ENCODE measurements at regions of chr10 and their contacts with region 1.

Region 1: GRCh38 chr10:7525314-7526016 is 114.6 kb upstream of the SFMBT2 start:
- DNase-seq: peak; percentile 64 to 71
- ATAC-seq: peak; percentile 78 to 92; a peak in 5 of 6 replicates
- H3K4me3 ChIP-seq: no peak overlapping the region
- H3K27ac ChIP-seq: no peak overlapping the region
- H3K4me1 ChIP-seq: no peaks in the 10 kb centered on the region
- CTCF ChIP-seq: peak; percentile 98
- EP300 ChIP-seq: no peak
- POLR2A ChIP-seq: no peak
- RAD21 ChIP-seq: peak; percentile 93 to 94

Region 2: DNA sequence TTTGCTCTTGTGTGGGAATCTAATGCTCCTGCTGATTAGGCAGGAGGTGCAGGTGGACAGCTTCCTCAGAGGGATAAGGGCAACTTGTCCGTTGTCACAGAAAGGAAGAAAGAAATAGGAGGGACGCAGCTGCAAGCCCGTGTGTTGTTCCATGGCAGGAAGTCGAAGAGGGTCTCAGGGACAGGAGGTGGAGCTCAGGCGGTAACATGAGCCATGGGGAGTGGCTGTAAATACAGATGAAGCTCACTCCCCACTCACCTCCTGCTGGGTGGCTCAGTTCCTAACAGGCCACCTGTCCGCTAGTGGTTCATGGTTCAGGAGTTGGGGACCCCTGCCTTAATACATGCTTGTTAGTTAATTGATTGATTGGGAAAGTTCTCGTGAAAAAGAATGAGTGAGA is 13.0 kb before region 1 on chr10:
- CTCF ChIA-PET with region 1: interaction called, 31 read pairs
- POLR2A ChIA-PET with region 1: no interaction called
- DNase-seq: no peak
- ATAC-seq: no peak
- H3K4me3 ChIP-seq: no peak overlapping the region
- H3K27ac ChIP-seq: no peak overlapping the region
- H3K4me1 ChIP-seq: no peaks in the 10 kb centered on the region
- CTCF ChIP-seq: no peak
- EP300 ChIP-seq: no peak
- POLR2A ChIP-seq: no peak
- RAD21 ChIP-seq: no peak

Region 3: DNA sequence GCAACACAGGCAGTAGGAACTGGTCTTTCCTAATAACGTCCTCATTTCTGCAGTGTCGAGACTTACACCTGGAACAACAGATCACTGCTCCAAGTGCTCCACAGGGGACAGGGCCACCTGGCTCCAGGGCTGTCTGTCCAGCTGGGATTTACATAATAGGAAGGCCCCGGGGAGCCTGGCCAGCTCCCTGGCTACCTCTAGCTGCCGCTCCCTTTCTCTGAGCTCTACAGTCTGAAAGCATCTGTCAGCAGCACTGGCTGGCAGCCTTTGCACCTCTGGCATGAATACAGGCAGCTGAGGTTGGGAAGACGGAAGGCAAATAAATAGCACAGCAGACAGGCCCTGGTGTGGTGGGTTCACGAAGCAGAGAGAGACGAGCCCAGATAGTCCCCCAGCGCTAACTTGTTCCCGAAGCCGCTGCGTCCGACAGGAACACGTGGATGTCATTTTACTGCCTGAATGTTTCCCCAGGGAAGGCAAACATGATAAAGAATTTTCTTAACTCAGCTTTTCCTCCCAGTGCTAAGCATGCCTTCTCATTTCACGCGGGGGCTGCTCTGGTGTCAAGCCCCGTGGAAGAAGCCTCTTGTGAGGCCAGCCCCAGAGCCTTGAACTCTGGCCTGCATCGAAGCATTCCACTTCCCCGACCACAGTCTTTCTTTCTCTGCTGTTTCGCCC is 35.9 kb after region 1 on chr10:
- CTCF ChIA-PET with region 1: interaction called, 10 read pairs
- POLR2A ChIA-PET with region 1: no interaction called
- DNase-seq: no peak
- ATAC-seq: no peak
- H3K4me3 ChIP-seq: no peak overlapping the region
- H3K27ac ChIP-seq: no peak overlapping the region
- H3K4me1 ChIP-seq: no peaks in the 10 kb centered on the region
- CTCF ChIP-seq: no peak
- EP300 ChIP-seq: no peak
- POLR2A ChIP-seq: no peak
- RAD21 ChIP-seq: no peak

Region 4: GRCh38 chr10:7687228-7687907 is 161.9 kb after region 1 on chr10:
- CTCF ChIA-PET with region 1: interaction called, 106 read pairs
- POLR2A ChIA-PET with region 1: no interaction called
- DNase-seq: peak; percentile 74 to 94
- ATAC-seq: peak; percentile 95 to 99
- H3K4me3 ChIP-seq: no peak overlapping the region
- H3K27ac ChIP-seq: peak overlapping the region in 1 of 2 experiments; percentile 3; a peak in 1 of 6 replicates
- H3K4me1 ChIP-seq: 0 out of 3 replicates have a peak, but pooled peaks cover 4% of the 10 kb centered on the region
- CTCF ChIP-seq: peak; percentile 94
- EP300 ChIP-seq: no peak
- POLR2A ChIP-seq: no peak
- RAD21 ChIP-seq: peak; percentile 89 to 93

Region 5: GRCh38 chr10:9209105-9209798 is 1683.8 kb after region 1 on chr10:
- CTCF ChIA-PET with region 1: interaction called, 12 read pairs
- POLR2A ChIA-PET with region 1: no interaction called
- DNase-seq: peak; percentile 38 to 68
- ATAC-seq: peak; percentile 54 to 73; a peak in 4 of 6 replicates
- H3K4me3 ChIP-seq: no peak overlapping the region
- H3K27ac ChIP-seq: no peak overlapping the region
- H3K4me1 ChIP-seq: 0 out of 3 replicates have a peak, but pooled peaks cover 3% of the 10 kb centered on the region
- CTCF ChIP-seq: peak; percentile 86
- EP300 ChIP-seq: no peak
- POLR2A ChIP-seq: no peak
- RAD21 ChIP-seq: peak; percentile 89 to 90

Region 6: GRCh38 chr10:9294865-9295264 is 1769.4 kb after region 1 on chr10:
- CTCF ChIA-PET with region 1: interaction called, 20 read pairs
- POLR2A ChIA-PET with region 1: no interaction called
- DNase-seq: no peak
- ATAC-seq: no peak
- H3K4me3 ChIP-seq: no peak overlapping the region
- H3K27ac ChIP-seq: no peak overlapping the region
- H3K4me1 ChIP-seq: no peaks in the 10 kb centered on the region
- CTCF ChIP-seq: no peak
- EP300 ChIP-seq: no peak
- POLR2A ChIP-seq: no peak
- RAD21 ChIP-seq: no peak

Region 7: DNA sequence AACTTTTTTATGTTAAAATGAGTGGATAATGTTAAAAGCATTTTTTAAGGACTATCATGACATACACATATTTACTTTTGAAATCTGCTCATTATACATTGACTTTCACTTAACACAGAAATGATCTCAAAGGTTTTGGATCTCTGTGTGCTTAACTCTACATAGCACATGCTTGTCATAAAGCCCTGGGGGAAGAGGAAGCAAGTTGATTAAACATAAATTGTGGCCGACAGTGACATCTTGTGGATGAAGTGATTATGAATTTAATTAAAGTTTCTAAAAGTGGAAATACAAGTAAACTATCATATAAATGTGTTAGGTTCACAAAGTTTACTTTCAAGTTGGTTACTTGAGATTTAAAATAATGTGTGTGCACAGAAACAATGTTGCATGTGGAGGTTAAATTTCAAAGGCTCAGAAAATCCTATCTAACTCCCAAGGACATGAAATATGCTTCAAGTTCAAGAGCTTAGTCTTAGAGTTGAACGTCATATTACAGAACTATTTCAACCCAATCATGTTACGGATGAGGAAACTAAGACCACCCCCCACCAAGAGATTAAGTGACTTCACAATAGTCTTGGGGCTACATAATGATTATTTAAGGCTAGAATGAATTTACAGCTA is 1776.8 kb after region 1 on chr10:
- CTCF ChIA-PET with region 1: interaction called, 58 read pairs
- POLR2A ChIA-PET with region 1: no interaction called
- DNase-seq: peak; percentile 16 to 65
- ATAC-seq: peak; percentile 64 to 72; a peak in 4 of 6 replicates
- H3K4me3 ChIP-seq: no peak overlapping the region
- H3K27ac ChIP-seq: no peak overlapping the region
- H3K4me1 ChIP-seq: no peaks in the 10 kb centered on the region
- CTCF ChIP-seq: peak; percentile 71
- EP300 ChIP-seq: no peak
- POLR2A ChIP-seq: no peak
- RAD21 ChIP-seq: peak; percentile 68 to 76